AG04450 (cell line): ENCODE measurements at regions of chr18 and their contacts with region 1.

Region 1: DNA sequence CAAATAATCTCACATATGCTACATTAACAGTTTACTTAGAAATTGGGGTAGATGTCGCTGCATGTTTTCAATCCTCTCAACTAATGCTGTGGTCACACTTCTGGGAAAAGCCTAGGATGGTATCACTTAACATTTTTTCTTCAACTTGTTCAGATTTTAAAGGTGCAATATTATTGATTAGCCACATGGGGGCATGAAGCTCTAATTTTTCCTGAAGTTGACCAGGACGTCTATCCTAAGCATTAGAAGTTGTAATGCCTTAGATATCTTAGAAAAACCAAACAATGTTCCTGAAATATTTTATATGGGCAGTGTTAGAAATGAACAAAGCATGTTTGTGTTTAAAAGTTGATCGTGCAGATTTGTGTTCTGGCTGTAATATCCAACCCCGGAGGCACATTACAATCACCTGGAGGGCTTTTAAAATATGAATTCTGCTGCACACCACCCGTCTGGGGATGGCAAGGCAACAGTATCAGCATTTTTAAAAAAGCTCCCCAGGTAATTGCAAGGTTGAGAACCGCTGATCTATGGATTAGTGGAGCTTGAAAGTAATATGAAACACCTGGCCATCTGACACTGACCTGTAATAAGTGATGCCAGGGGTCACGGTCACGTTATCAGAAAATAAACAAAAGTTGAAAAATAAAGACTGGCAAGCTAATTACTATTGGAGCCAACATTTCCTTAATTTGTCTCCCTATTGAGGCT is 100.5 kb upstream of the LMAN1 start:
- DNase-seq: peak; percentile 33
- H3K4me3 ChIP-seq: no peak overlapping the region
- H3K27ac ChIP-seq: peak overlapping the region; percentile 39
- H3K27me3 ChIP-seq: no peaks in the 10 kb centered on the region
- CTCF ChIP-seq: peak; percentile 60

Region 2: DNA sequence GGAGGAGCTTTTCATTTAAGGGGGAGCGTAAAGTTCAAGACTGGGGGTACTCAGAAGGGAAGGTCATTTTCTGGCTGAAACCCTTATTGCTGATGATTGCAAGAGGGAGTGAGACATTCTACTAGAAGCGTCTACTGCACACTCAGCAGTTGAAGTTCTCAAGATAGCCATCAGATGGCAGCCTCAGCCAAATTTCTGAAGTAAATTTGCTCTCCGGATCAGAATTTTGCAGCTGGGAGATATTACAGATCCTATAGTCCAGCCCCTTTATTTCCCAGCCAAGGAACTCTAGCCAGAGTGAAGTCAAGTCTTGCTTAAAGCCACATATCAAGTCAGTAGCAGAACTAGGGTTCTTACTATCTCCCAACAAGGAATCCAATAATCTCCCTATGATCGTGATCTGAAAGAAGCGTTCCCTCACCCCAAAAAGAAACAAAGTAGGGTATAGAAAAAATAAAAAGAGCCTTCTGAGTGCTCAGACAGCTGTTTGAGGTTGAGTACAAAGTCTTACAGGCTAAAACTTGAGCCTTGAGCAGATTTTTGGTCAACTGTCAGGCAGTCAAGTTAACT is 210.2 kb before region 1 on chr18:
- CTCF ChIA-PET with region 1: interaction called, 10 read pairs
- POLR2A ChIA-PET with region 1: no interaction called
- DNase-seq: peak; percentile 65
- H3K4me3 ChIP-seq: no peak overlapping the region
- H3K27ac ChIP-seq: no peak overlapping the region
- H3K27me3 ChIP-seq: peaks cover 13% of the 10 kb centered on the region
- CTCF ChIP-seq: peak; percentile 88

Region 3: GRCh38 chr18:59448546-59448945 is 11.0 kb before region 1 on chr18:
- CTCF ChIA-PET with region 1: interaction called, 14 read pairs
- POLR2A ChIA-PET with region 1: interaction called, 4 read pairs
- DNase-seq: no peak
- H3K4me3 ChIP-seq: no peak overlapping the region
- H3K27ac ChIP-seq: no peak overlapping the region
- H3K27me3 ChIP-seq: no peaks in the 10 kb centered on the region
- CTCF ChIP-seq: no peak

Region 4: DNA sequence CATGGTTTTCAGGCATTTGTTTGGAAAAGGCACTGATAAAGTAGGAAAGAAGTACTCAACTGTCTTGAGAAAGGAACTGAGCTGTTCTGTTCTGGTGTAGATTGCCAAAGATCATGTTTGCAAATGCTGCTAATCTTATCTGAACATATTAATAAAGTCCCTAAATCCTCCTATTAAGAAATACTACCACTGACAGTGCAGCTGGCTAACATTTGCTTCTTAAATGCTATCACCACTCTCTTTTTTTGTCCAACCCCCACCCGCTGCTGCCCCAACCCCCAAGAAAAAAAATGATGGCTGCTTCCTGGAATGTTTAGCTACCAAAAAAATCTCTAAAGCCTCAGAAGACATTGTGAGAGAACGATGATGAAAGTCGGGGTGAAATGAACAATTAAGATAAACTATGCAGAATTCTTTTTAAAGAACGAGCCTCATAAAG is 107.0 kb after region 1 on chr18:
- CTCF ChIA-PET with region 1: interaction called, 10 read pairs
- POLR2A ChIA-PET with region 1: no interaction called
- DNase-seq: peak; percentile 58
- H3K4me3 ChIP-seq: no peak overlapping the region
- H3K27ac ChIP-seq: no peak overlapping the region
- H3K27me3 ChIP-seq: no peaks in the 10 kb centered on the region
- CTCF ChIP-seq: no peak

Region 5: DNA sequence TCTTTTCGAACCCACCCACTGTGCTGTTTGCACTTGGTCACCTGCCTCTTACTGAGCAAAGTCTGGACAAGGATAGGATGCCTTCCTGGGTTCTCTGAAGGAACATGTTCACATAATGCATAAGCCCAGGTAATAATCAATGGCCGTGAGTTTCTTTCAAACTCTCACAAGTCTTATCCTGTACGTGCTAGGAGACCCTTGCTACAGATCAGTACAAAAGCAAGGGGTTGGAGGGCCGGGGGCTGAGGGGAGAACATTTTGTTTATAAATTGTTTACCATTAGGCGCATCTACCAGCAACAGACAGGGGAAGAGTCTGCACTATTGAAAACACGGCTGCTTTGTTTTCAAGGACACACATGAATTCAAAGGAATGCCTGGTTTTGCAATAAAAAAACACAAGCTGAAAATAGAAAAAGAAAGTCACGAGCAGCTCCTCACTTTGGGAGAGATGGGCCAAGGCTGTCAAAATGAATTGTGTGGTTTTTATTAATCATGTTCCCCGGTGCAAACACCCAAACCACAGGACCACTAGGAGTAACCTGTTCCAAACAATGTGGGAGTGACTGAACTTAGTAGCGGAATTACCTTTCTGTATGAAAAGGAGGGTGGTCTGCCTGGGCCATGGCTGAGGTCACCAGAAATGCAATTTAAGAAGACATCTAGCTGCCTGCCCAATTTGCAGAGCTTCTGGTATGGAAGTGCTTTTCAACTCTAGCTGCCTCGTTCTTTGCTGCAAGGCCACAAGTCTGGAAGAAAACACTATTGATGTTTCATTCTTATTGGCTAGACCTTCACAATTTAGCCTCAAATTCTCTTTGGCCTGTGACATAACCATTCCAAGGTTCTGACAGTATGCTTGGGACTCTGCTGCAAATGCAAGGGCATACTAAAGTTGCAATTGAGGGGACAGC is 164.2 kb after region 1 on chr18:
- CTCF ChIA-PET with region 1: interaction called, 35 read pairs
- POLR2A ChIA-PET with region 1: no interaction called
- DNase-seq: no peak
- H3K4me3 ChIP-seq: no peak overlapping the region
- H3K27ac ChIP-seq: peak overlapping the region; percentile 49
- H3K27me3 ChIP-seq: no peaks in the 10 kb centered on the region
- CTCF ChIP-seq: no peak

Region 6: DNA sequence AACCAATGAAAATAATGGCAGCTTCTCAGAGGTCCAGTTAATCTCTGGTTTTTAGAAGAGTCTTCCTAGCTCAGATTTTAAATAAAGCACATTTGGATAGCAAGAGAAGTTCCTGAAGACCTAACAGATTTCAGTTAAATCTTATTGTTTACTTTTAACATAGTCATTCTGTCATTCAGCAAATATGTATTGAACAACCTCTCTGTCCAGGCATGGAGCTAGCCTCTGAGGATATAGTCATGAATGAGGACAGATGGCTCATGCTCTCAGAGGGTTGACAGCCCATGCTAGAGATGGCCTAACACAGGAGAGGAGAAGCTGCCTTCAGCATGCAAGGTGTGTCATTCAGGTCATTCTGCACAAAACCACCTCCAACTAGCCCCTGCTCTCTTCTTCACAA is 231.5 kb after region 1 on chr18:
- CTCF ChIA-PET with region 1: interaction called, 77 read pairs
- POLR2A ChIA-PET with region 1: interaction called, 3 read pairs
- DNase-seq: no peak
- H3K4me3 ChIP-seq: no peak overlapping the region
- H3K27ac ChIP-seq: no peak overlapping the region
- H3K27me3 ChIP-seq: no peaks in the 10 kb centered on the region
- CTCF ChIP-seq: no peak